Psoas muscle (tissue), 8 donors: ENCODE measurements at regions of chr17 and their contacts with region 1.

Region 1: GRCh38 chr17:80254396-80255251 is 6.0 kb upstream of the RNF213 start:
- DNase-seq: peak in 1 of 2 donors; percentile 41
- ATAC-seq: peak; percentile 87 to 91 (median 90)
- H3K4me3 ChIP-seq: no peak overlapping the region
- H3K27ac ChIP-seq: peak overlapping the region; percentile 69
- H3K4me1 ChIP-seq: peaks cover 24% of the 10 kb centered on the region
- H3K27me3 ChIP-seq: no peaks in the 10 kb centered on the region
- CTCF ChIP-seq: no peak

Region 2: DNA sequence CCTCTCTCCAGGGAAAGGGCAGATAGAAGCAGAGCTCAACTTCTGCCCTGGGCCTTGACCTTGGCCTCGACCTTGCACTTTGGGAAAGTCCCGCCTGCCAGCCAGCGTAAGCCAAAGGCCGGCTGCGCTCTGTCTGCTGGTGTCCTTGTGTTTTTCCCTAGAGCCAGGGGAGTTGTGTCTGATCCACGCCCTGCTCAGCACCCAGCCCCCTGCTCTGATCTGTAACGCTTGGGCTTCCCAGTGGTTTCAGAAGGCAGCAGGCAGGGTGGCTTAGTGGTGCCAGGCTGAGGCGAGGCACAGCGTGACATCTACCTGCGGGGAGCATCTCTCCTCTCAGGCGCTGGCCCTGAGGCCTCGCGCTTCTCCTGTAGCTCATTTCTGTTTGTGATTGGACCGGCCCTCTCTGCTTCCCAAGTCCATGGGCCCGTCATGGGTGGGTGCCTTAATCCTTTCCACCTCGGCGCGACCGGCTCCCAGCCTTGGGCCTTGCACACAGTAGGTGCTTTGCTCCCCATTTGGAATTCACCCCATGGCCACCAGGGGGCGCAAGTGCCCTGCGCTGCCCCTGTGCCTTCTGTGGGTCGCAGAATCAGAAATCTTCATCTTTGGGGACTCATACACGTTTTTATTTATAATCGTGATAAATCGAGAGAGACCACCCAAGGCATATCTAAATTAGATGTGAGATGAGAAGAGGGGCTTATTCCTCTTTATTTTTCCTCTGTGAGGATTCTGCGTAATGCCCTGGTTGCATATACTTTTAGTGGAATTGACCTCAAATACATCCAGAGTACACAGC is 58.7 kb before region 1 on chr17:
- intact Hi-C with region 1: loop called in 1 of 2 experiments (anchors 5 kb)
- DNase-seq: peak in 1 of 2 donors; percentile 39
- ATAC-seq: peak in 1 of 4 donors; percentile 55
- H3K4me3 ChIP-seq: no peak overlapping the region
- H3K27ac ChIP-seq: no peak overlapping the region
- H3K4me1 ChIP-seq: peaks cover 5% of the 10 kb centered on the region
- H3K27me3 ChIP-seq: peaks cover 0 to 9% (median 2%) of the 10 kb centered on the region in 3 donors
- CTCF ChIP-seq: peak; percentile 92

Region 3: GRCh38 chr17:80316927-80317702 is 62.5 kb after region 1 on chr17:
- intact Hi-C with region 1: no loop called
- DNase-seq: no peak
- ATAC-seq: no peak
- H3K4me3 ChIP-seq: no peak overlapping the region
- H3K27ac ChIP-seq: no peak overlapping the region
- H3K4me1 ChIP-seq: peaks cover 14% of the 10 kb centered on the region
- H3K27me3 ChIP-seq: no peaks in the 10 kb centered on the region
- CTCF ChIP-seq: no peak